HepG2 (cell line): ENCODE measurements at regions of chr2 and their contacts with region 1.

Region 1: GRCh38 chr2:96856776-96857673 is 791 bp downstream of the ANKRD39 start:
- DNase-seq: peak; percentile 47
- ATAC-seq: peak; percentile 30
- H3K4me3 ChIP-seq: peak overlapping the region; percentile 73 to 84 (median 75)
- H3K27ac ChIP-seq: peak overlapping the region; percentile 52
- H3K4me1 ChIP-seq: peaks cover 54% of the 10 kb centered on the region
- H3K27me3 ChIP-seq: no peaks in the 10 kb centered on the region; a peak in 1 of 5 replicates
- CTCF ChIP-seq: no peak
- EP300 ChIP-seq: no peak
- POLR2A ChIP-seq: peak in 1 of 2 experiments; percentile 72; a peak in 2 of 4 replicates
- RAD21 ChIP-seq: no peak

Region 2: GRCh38 chr2:96642564-96643360 is 214.3 kb before region 1 on chr2 and contains the start of gene FER1L5:
- CTCF ChIA-PET with region 1: no interaction called
- POLR2A ChIA-PET with region 1: no interaction called
- in situ Hi-C with region 1: no loop called
- intact Hi-C with region 1: no loop called
- DNase-seq: no peak
- ATAC-seq: no peak
- H3K4me3 ChIP-seq: no peak within 1 kb of the TSS
- H3K27ac ChIP-seq: no peak within 1 kb of the TSS
- H3K4me1 ChIP-seq: peaks cover 12% of the 10 kb centered on the region
- H3K27me3 ChIP-seq: peaks cover 0 to 14% of the 10 kb centered on the region in 2 experiments; a peak in 3 of 5 replicates
- CTCF ChIP-seq: no peak
- EP300 ChIP-seq: no peak
- POLR2A ChIP-seq: no peak
- RAD21 ChIP-seq: no peak
- total RNA-seq, gene FER1L5: 0.02 TPM in 1 of 2 replicates, not detected in the other

Region 3: DNA sequence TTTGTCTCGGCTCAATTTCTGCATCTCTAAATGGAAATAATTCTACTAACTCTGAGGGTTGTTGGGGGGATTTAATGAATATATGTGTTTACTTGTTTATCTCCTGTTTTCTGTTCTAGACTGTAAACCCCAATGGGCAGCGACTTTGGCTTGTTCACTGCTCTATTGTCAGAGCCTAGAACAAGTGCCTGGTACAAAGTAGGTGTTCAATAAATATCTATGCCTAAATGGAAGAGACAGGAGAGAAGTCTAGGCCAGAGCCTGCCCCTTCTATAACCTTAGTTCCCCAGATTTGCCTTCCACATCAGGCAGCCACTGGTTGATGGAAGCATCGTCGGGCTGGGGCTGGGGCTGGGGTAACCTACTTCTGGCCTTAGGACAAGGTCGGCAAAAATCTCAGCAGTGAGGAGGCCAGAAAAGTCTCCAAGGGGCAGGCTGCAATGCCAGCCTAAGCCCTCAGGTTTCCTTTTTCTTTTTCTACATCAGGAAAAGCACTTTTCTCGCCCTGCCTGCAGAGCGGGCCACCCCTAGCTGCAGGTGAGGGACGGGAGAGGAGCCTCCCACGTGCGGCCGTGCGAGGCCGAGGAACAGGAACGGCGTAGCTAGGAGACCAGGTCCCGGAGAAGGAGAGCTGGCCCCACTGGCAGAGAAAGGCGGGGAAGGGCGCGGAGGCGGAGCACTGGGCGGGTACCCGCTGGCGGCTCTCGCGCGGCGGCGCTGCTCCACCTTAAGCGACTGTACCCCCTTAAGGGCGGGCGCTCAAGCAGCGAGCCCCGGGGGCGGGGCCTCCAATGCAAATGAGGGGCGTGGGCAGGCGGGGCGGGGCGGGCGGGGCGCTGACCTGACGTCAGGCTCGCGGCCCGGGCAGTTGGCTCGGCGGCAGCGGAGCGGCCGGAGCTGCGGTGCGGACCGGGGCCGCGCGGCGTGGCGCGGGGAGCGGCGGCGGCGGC is 96.7 kb before region 1 on chr2 and contains the start of gene CNNM4:
- CTCF ChIA-PET with region 1: no interaction called
- POLR2A ChIA-PET with region 1: interaction called, 10 read pairs
- in situ Hi-C with region 1: no loop called
- intact Hi-C with region 1: no loop called
- DNase-seq: peak; percentile 88
- ATAC-seq: peak; percentile 75
- H3K4me3 ChIP-seq: peak within 1 kb of the TSS; percentile 59 to 94 (median 77)
- H3K27ac ChIP-seq: peak within 1 kb of the TSS; percentile 39
- H3K4me1 ChIP-seq: peaks cover 65% of the 10 kb centered on the region
- H3K27me3 ChIP-seq: peaks cover 3 to 14% of the 10 kb centered on the region in 2 experiments; a peak in 3 of 5 replicates
- CTCF ChIP-seq: peak; percentile 57
- EP300 ChIP-seq: 0 out of 4 replicates have a peak, but pooled peaks of 1 of the 2 experiments have one; percentile 8
- POLR2A ChIP-seq: peak in 1 of 2 experiments; percentile 57; a peak in 2 of 4 replicates
- RAD21 ChIP-seq: no peak
- total RNA-seq, gene CNNM4: 3.0 and 5.9 TPM in 2 replicates

Region 4: GRCh38 chr2:96816128-96816835 is 40.7 kb before region 1 on chr2 and contains the start of gene CNNM3:
- CTCF ChIA-PET with region 1: no interaction called
- POLR2A ChIA-PET with region 1: interaction called, 99 read pairs
- in situ Hi-C with region 1: no loop called
- intact Hi-C with region 1: loop called (anchors 2 kb)
- DNase-seq: peak; percentile 91
- ATAC-seq: peak; percentile 87
- H3K4me3 ChIP-seq: peak within 1 kb of the TSS; percentile 87 to 96 (median 91)
- H3K27ac ChIP-seq: peak within 1 kb of the TSS; percentile 92
- H3K4me1 ChIP-seq: peaks cover 72% of the 10 kb centered on the region
- H3K27me3 ChIP-seq: no peaks in the 10 kb centered on the region; a peak in 1 of 5 replicates
- CTCF ChIP-seq: peak; percentile 72
- EP300 ChIP-seq: no peak
- POLR2A ChIP-seq: peak in 1 of 2 experiments; percentile 65; a peak in 2 of 4 replicates
- RAD21 ChIP-seq: peak; percentile 27
- total RNA-seq, gene CNNM3: 8.4 and 21.2 TPM in 2 replicates

Region 5: GRCh38 chr2:96868555-96869280 is 11.7 kb after region 1 on chr2:
- CTCF ChIA-PET with region 1: interaction called, 17 read pairs
- POLR2A ChIA-PET with region 1: interaction called, 152 read pairs
- in situ Hi-C with region 1: no loop called
- intact Hi-C with region 1: loop called (anchors 1 kb)
- DNase-seq: peak; percentile 95
- ATAC-seq: peak; percentile 79
- H3K4me3 ChIP-seq: peak overlapping the region; percentile 81 to 100 (median 93)
- H3K27ac ChIP-seq: peak overlapping the region; percentile 96
- H3K4me1 ChIP-seq: peaks cover 35% of the 10 kb centered on the region
- H3K27me3 ChIP-seq: peaks cover under 1 to 22% of the 10 kb centered on the region in 2 experiments; a peak in 4 of 5 replicates
- CTCF ChIP-seq: peak; percentile 69
- EP300 ChIP-seq: peak in 1 of 2 experiments; percentile 56; a peak in 2 of 4 replicates
- POLR2A ChIP-seq: peak in 1 of 2 experiments; percentile 83; a peak in 2 of 4 replicates
- RAD21 ChIP-seq: peak; percentile 80

Region 6: GRCh38 chr2:96907115-96908041 is 50.4 kb after region 1 on chr2:
- CTCF ChIA-PET with region 1: no interaction called
- POLR2A ChIA-PET with region 1: no interaction called
- in situ Hi-C with region 1: no loop called
- intact Hi-C with region 1: loop called (anchors 1 kb)
- DNase-seq: no peak
- ATAC-seq: peak; percentile 77
- H3K4me3 ChIP-seq: peak overlapping the region in 1 of 3 experiments; percentile 13; a peak in 2 of 6 replicates
- H3K27ac ChIP-seq: no peak overlapping the region
- H3K4me1 ChIP-seq: no peaks in the 10 kb centered on the region
- H3K27me3 ChIP-seq: peaks cover 12 to 61% of the 10 kb centered on the region in 2 experiments
- CTCF ChIP-seq: no peak
- EP300 ChIP-seq: no peak
- POLR2A ChIP-seq: no peak
- RAD21 ChIP-seq: no peak

Region 7: DNA sequence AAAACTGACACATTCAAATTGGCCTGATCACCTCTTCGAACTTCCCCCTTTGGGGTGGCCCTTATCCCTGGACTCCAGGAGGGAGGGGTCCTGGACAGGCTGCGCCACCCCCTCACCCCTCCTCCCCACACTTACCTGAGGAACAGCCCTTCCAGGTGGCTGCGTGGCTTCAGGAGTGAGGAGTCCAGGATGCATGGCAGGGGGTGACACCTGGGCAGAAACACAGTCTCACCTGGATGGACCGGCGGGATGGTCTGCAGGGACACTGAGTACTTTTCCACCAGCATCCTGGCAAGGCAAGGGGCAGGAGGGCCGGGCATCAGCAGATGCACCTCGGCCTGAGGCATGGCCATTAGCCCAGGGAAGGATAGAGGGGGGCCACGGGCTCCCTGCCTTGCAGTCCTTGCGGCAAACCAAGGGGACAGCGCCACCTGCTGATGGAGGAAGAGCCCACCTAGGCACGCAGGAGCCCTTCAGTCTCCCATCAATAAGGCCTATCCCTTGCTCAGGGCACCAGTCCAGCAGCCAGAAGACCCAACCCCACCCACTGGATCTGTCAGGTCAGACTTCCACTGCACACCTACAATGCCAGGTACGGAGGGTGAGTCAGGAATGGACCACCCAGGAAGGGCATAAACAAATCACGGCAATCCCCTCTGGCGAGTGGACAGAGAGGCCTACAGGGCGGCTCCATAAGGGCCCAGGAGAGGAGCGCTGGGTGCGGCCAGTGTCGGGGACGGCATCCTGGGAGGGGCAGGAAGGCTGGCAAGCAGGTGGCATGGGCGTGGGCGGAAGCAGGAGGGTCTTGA is 103.3 kb after region 1 on chr2:
- CTCF ChIA-PET with region 1: interaction called, 12 read pairs
- POLR2A ChIA-PET with region 1: no interaction called
- in situ Hi-C with region 1: no loop called
- intact Hi-C with region 1: loop called (anchors 1 kb)
- DNase-seq: peak; percentile 76
- ATAC-seq: peak; percentile 98
- H3K4me3 ChIP-seq: no peak overlapping the region
- H3K27ac ChIP-seq: no peak overlapping the region
- H3K4me1 ChIP-seq: no peaks in the 10 kb centered on the region
- H3K27me3 ChIP-seq: peaks cover 0 to 35% of the 10 kb centered on the region in 2 experiments; a peak in 3 of 5 replicates
- CTCF ChIP-seq: peak; percentile 100
- EP300 ChIP-seq: no peak
- POLR2A ChIP-seq: no peak
- RAD21 ChIP-seq: peak; percentile 97

Region 8: DNA sequence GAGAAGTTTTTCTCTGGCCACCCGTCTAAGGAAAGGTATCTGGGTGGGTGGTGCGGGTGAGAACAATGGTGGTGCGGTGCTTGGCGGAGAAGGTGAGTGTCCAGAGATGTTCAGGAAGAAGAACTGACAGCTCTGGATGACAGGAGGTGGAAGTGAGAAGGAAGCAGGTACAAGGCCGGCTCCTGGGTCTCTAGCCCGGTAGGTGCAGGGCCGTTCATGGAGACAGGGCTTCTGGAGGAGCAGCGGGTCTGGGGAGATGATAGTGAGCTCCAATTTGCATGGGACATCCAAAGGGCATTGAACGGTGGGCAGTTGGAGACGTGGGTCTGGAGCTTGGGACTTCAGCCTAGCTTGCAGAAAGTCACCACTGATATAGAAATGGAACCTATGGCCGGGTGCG is 238.6 kb after region 1 on chr2:
- CTCF ChIA-PET with region 1: no interaction called
- POLR2A ChIA-PET with region 1: no interaction called
- in situ Hi-C with region 1: no loop called
- intact Hi-C with region 1: no loop called
- DNase-seq: no peak
- ATAC-seq: no peak
- H3K4me3 ChIP-seq: peak overlapping the region in 2 of 3 experiments; percentile 38 to 60; a peak in 5 of 6 replicates
- H3K27ac ChIP-seq: no peak overlapping the region
- H3K4me1 ChIP-seq: peaks cover 8% of the 10 kb centered on the region; the same call in 1 of the 2 replicates
- H3K27me3 ChIP-seq: peaks cover 0 to 3% of the 10 kb centered on the region in 2 experiments; a peak in 1 of 5 replicates
- CTCF ChIP-seq: no peak
- EP300 ChIP-seq: no peak
- POLR2A ChIP-seq: no peak
- RAD21 ChIP-seq: no peak